ENCODE measurements at regions of chr1 and their contacts with region 1.

Region 1: DNA sequence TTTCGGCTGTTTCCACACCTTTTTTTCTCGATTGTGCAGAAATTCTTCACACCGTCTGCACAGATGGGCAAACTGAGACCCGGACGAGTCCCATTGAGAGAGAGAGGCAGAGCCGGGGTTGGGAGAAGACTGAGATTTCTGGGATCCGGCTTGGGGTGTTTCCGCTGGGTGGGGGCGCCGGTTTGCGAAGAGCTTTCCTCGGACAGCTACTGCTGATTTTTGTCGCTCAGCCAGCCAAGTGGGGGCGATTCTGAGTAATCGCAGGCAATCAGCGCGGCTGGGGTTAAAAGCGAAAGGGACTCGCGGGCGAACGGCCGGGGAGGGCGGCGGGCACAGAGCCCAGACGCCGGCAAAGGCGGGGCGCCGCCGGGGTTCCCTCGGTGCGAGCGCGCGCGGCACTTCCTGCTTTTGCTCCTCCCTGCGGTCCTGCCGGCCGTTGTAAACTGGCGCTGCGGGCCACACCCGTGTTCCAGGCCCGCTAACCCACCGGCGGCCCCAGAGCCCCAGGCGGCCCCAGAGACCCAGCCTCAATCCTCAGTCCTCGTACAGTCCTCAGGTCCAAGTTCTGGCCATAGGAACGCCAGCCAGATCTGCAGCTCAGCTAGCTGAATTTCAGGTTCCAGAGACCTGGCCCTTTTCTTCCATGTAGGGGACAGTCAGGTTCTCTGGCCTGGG is 32.4 kb upstream of the JUN start:
- DNase-seq: peak; percentile 76 to 93
- H3K4me3 ChIP-seq: peak overlapping the region; percentile 83
- H3K27ac ChIP-seq: peak overlapping the region; percentile 99
- H3K4me1 ChIP-seq: peaks cover 63% of the 10 kb centered on the region
- H3K27me3 ChIP-seq: no peaks in the 10 kb centered on the region
- CTCF ChIP-seq: no peak

Region 2: GRCh38 chr1:58739856-58740466 is 76.2 kb before region 1 on chr1:
- CTCF ChIA-PET with region 1: interaction called, 3 read pairs
- POLR2A ChIA-PET with region 1: no interaction called
- intact Hi-C with region 1: loop called (anchors 1 kb)
- DNase-seq: peak in 1 of 2 experiments; percentile 56
- H3K4me3 ChIP-seq: no peak overlapping the region
- H3K27ac ChIP-seq: no peak overlapping the region
- H3K4me1 ChIP-seq: peaks cover 12% of the 10 kb centered on the region
- H3K27me3 ChIP-seq: no peaks in the 10 kb centered on the region
- CTCF ChIP-seq: peak; percentile 95

Region 3: DNA sequence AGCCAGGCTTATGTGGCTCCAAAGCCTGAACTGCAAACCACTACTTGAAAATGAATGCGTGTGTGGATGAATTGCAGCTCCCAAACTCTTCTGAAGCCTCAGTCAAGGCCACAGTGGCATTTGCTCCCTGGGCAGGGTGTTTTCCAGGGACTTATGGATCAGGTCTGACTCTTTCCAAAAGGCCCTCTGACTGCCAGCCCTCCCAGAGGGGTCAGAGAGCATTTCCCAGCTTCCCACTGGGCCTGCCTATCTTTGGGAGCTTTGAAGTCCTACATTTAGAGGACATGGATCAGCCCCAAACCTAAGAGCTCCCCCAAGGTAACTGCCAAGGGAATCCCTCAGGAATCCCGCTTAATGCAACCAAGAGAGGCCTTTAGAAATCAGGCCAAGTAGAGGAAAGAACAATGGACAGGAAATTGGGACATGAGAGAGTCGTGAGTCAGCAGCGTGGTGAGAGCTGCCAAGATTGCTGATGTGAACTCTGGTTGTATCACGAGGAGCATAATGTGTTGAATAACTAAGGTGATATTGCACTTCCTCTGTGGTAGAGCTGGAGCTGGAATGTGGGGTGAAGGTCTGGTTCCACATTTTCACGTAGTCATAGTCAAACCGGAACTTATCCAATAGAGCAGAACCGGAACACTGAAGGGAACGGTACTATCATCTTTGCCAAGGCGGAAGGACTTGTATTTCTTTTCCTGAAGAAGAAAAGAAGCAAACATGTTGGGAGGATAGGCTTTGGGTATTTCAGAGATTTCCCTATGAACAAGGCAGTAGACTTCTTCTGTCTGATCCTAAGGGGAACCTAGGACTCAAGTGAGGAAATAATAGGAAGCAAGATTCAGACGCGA is 67.1 kb after region 1 on chr1:
- CTCF ChIA-PET with region 1: interaction called, 3 read pairs
- POLR2A ChIA-PET with region 1: interaction called, 7 read pairs
- intact Hi-C with region 1: loop called (anchors 1 kb)
- DNase-seq: peak; percentile 87 to 98
- H3K4me3 ChIP-seq: peak overlapping the region; percentile 16; the same call in 1 of the 2 replicates
- H3K27ac ChIP-seq: peak overlapping the region; percentile 99
- H3K4me1 ChIP-seq: peaks cover 68% of the 10 kb centered on the region
- H3K27me3 ChIP-seq: no peaks in the 10 kb centered on the region
- CTCF ChIP-seq: no peak

Region 4: DNA sequence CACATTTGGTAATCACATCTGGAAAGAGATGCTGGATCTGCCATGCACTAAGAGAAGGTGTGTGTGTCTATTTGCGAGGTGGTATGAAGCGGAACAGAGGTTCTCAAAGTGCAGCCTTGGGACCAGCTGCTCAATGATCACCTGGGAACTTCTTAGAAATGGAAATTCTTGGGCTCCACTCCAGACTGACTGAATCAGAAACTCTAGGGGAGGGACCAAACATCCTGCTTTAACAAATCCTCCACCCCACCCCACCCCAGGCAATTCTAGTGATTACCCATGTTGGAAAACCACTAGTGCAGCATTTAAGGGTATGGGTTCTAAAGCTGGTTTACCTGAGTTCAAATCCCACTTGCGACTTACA is 111.5 kb after region 1 on chr1:
- CTCF ChIA-PET with region 1: interaction called, 4 read pairs
- POLR2A ChIA-PET with region 1: interaction called, 3 read pairs
- intact Hi-C with region 1: loop called (anchors 1 kb)
- DNase-seq: peak in 1 of 2 experiments; percentile 18
- H3K4me3 ChIP-seq: no peak overlapping the region
- H3K27ac ChIP-seq: peak overlapping the region; percentile 78; the same call in 1 of the 2 replicates
- H3K4me1 ChIP-seq: peaks cover 61% of the 10 kb centered on the region
- H3K27me3 ChIP-seq: no peaks in the 10 kb centered on the region
- CTCF ChIP-seq: no peak

Region 5: GRCh38 chr1:59143133-59143487 is 326.9 kb after region 1 on chr1:
- CTCF ChIA-PET with region 1: no interaction called
- POLR2A ChIA-PET with region 1: interaction called, 31 read pairs
- intact Hi-C with region 1: loop called (anchors 1 kb)
- DNase-seq: peak; percentile 76 to 99
- H3K4me3 ChIP-seq: peak overlapping the region; percentile 14; the same call in 1 of the 2 replicates
- H3K27ac ChIP-seq: peak overlapping the region; percentile 94
- H3K4me1 ChIP-seq: peaks cover 87% of the 10 kb centered on the region
- H3K27me3 ChIP-seq: no peaks in the 10 kb centered on the region
- CTCF ChIP-seq: no peak

Measured in PC-9 (cell line).